ENCODE measurements at regions of chr16 and their contacts with region 1.

Region 1: DNA sequence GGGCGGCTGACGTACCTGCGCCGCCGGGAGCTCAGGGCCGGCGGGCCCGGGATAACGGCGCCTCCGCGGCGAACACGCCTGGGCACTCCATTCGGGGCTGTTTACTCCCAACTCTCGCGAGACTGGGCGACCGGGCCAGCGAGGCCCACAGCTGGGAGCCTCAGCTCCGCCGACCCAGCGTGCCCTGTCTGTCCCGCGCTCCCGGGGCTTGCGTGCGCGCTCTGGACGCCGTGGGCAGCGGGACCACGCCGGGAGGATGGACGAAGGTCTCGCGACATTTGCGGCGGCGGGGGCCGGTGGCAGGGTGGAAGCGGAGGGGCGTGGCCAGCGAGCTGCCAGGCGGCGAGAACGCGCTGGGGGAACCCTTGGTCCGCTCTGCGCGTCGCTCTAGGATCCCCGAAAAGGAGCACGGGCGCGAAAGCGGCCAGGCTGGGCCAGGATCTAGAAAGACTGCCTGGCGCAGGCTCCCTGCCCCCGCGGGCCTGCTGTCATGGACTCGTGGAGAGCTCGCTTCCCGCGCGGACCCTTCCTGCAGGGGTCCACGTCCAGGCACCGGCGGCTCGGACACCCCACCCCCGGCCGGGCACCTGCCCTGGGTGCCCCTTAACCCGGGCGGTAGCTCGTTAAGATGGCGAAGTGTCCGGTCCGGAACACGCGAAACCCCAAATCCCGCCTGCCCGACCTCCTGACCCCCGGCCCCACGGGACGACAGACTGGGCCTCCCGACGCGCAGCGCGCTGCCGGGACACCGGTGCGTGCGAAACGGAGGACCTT is at the start of gene MBTPS1:
- DNase-seq: peak; percentile 98
- H3K4me3 Mint-ChIP-seq: peak within 1 kb of the TSS; percentile 91
- H3K27ac Mint-ChIP-seq: peak within 1 kb of the TSS; percentile 88
- H3K4me1 Mint-ChIP-seq: peaks cover 24% of the 10 kb centered on the region
- H3K27me3 Mint-ChIP-seq: no peaks in the 10 kb centered on the region
- total RNA-seq, gene MBTPS1: 46.4 to 50.4 TPM

Region 2: DNA sequence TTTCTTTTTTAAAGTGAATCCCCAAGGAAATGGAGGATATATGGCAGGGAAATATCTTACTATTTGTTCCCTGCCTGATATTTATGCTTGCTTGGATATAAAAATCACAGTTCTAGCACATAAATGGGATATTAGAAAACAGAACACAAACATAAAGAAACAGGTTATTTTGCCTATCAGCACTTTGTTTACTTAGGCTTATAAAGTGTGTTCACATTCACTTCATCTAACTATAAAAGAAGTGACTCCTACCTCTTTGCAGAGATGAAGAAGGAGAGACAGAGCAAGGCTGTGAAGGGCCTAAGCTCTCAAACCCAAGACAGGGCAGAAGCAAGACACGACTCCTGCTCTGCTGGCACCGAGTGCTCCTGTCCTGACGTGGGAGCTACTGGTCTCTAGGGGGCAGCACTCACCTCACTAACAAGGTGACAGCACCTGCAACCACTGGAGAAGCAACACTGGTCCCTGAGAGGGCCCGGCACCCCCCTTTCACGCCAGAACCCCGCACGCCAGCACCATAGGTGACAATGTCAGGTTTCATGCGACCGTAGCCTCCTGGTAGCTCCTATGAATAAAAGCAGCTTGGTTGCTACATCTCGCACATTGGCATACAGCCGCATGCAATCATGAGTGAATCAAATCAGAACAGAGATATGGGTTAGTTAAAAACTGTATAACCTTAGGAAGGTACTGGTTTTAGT is 32.2 kb before region 1 on chr16:
- CTCF ChIA-PET with region 1: interaction called, 31 read pairs
- POLR2A ChIA-PET with region 1: interaction called, 15 read pairs
- DNase-seq: peak; percentile 76
- H3K4me3 Mint-ChIP-seq: no peak overlapping the region
- H3K27ac Mint-ChIP-seq: no peak overlapping the region
- H3K4me1 Mint-ChIP-seq: peaks cover 48% of the 10 kb centered on the region
- H3K27me3 Mint-ChIP-seq: no peaks in the 10 kb centered on the region

Region 3: GRCh38 chr16:84096115-84097012 is 20.5 kb before region 1 on chr16:
- CTCF ChIA-PET with region 1: interaction called, 9 read pairs
- POLR2A ChIA-PET with region 1: interaction called, 18 read pairs
- DNase-seq: no peak
- H3K4me3 Mint-ChIP-seq: no peak overlapping the region
- H3K27ac Mint-ChIP-seq: no peak overlapping the region
- H3K4me1 Mint-ChIP-seq: peaks cover 10% of the 10 kb centered on the region
- H3K27me3 Mint-ChIP-seq: no peaks in the 10 kb centered on the region

Region 4: GRCh38 chr16:84104228-84104627 is 12.7 kb before region 1 on chr16:
- CTCF ChIA-PET with region 1: interaction called, 9 read pairs
- POLR2A ChIA-PET with region 1: interaction called, 24 read pairs
- DNase-seq: no peak
- H3K4me3 Mint-ChIP-seq: no peak overlapping the region
- H3K27ac Mint-ChIP-seq: no peak overlapping the region
- H3K4me1 Mint-ChIP-seq: peaks cover 15% of the 10 kb centered on the region
- H3K27me3 Mint-ChIP-seq: no peaks in the 10 kb centered on the region

Region 5: GRCh38 chr16:84138824-84139627 is 22.1 kb after region 1 on chr16:
- CTCF ChIA-PET with region 1: interaction called, 7 read pairs
- POLR2A ChIA-PET with region 1: interaction called, 38 read pairs
- DNase-seq: peak; percentile 38
- H3K4me3 Mint-ChIP-seq: no peak overlapping the region
- H3K27ac Mint-ChIP-seq: peak overlapping the region; percentile 45
- H3K4me1 Mint-ChIP-seq: peaks cover 27% of the 10 kb centered on the region
- H3K27me3 Mint-ChIP-seq: no peaks in the 10 kb centered on the region

Region 6: DNA sequence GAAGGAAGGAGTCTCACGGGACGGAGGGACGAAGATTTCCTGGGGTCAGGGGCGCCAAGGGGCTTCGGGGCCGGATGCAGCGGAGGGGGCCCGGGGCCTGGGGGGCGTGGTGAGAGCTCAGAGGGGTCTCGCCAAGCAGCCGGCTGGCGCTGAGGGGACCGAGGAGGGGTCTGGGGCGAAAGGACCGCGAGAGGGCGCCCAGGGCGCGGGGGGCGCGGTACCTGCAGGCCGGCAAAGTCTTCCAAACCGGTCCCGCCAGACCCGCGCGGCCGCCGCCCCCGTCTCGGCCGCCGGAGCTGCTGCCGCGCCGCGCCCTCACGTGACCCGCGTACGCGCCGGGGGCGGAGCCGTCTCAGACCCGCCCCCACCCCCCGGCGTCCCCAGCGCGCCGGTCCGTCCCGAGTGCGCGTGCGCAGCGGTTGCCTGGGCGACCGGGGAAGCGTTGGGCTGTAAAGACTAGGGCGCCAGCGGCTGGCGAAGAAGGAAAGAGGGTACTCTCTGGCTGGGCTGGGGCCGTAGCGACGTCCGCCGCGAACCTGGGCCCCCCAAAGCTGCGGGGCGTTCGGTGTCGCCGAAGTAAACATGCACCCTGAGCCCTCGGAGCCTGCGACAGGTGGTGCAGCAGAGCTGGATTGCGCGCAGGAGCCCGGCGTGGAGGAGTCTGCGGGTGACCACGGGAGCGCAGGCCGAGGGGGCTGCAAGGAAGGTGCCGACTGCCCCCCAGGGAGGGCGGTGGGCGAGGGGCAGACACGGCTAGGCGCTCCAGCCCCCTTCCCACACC is 28.1 kb after region 1 on chr16 and contains the starts of genes DNAAF1 and HSDL1:
- CTCF ChIA-PET with region 1: interaction called, 9 read pairs
- POLR2A ChIA-PET with region 1: interaction called, 38 read pairs
- DNase-seq: peak; percentile 94
- H3K4me3 Mint-ChIP-seq: peak within 1 kb of the TSS; percentile 88
- H3K27ac Mint-ChIP-seq: peak within 1 kb of the TSS; percentile 62
- H3K4me1 Mint-ChIP-seq: peaks cover 10% of the 10 kb centered on the region
- H3K27me3 Mint-ChIP-seq: peaks cover 10% of the 10 kb centered on the region
- total RNA-seq, gene DNAAF1: not detected
- total RNA-seq, gene HSDL1: 15.2 to 16.3 TPM

Region 7: DNA sequence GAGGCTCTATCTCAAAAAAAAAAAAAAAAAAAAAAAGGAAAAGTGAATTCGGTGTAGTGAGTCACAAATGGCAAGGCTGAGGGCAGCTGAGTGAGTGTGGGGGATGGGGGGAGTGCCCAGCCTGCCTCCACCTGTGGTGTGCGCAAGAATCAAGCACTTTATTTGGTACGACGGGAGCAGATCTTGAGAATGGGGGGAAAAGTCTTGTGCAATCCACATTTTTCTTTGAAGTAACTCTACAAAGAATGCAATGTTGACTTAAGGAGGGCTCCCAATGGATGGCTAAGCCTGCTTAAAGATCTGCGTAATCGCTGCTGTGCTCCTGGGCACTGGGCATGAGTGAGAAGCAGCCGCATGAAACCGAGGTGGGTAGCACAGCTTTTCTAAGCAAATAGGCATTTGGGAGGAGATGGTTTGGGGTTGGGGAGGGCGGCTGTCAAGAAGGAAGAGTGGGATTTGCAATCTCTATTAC is 279.7 kb after region 1 on chr16:
- CTCF ChIA-PET with region 1: no interaction called
- POLR2A ChIA-PET with region 1: no interaction called
- DNase-seq: no peak
- H3K4me3 Mint-ChIP-seq: no peak overlapping the region
- H3K27ac Mint-ChIP-seq: no peak overlapping the region
- H3K4me1 Mint-ChIP-seq: no peaks in the 10 kb centered on the region
- H3K27me3 Mint-ChIP-seq: peaks cover 23% of the 10 kb centered on the region